Ascending aorta (tissue), 2 donors: ENCODE measurements at regions of chr14 and their contacts with region 1.

Region 1: DNA sequence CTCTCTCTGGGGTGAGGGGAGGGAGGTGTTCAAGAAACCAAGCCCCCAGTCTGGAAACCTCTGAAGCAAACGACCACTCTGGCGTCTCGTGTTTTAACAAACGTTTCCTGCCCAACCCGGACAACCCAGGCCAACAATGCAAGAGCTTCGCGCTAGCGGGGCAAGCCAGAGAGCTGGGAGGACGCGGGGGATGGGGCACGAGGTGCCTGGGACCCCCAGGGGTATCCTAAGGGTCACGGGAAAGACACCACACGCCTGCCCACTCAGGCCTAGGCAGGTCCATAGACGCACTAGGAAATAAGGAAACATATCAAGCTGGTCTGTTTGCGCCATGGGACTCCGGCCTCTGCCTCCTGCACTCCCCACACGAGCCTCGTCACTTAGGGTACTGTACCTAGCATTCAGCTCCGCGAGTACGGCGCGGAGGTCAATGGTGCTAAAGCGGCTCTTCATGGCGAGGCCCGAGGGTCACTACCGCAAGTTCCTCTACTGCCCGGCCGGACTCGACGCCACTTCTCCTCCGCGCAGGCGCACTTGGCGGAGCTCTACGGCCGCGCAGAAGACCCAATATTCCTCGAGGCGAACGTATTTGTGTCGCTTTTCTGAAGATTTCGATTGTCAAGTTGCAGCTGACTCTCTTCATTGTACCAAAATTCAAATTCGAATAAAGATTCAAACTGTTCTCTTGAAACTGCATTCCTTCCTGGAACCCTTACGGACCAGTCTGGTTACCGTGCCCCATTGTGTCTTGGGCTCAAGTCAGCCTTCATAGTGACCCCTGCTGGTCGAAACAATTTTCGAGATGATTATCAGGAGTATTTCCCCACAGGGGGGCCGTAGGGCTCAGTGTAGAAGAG is at the start of gene NEMF:
- DNase-seq: peak in 1 of 2 donors; percentile 93
- H3K4me3 ChIP-seq: peak within 1 kb of the TSS; percentile 81 to 92
- H3K27ac ChIP-seq: peak within 1 kb of the TSS; percentile 86 to 90
- H3K4me1 ChIP-seq: peaks cover 0 to 9% of the 10 kb centered on the region in 2 donors
- H3K27me3 ChIP-seq: no peaks in the 10 kb centered on the region
- CTCF ChIP-seq: peak; percentile 73 to 85 (median 80)
- total RNA-seq, gene NEMF: 14.6 TPM

Region 2: DNA sequence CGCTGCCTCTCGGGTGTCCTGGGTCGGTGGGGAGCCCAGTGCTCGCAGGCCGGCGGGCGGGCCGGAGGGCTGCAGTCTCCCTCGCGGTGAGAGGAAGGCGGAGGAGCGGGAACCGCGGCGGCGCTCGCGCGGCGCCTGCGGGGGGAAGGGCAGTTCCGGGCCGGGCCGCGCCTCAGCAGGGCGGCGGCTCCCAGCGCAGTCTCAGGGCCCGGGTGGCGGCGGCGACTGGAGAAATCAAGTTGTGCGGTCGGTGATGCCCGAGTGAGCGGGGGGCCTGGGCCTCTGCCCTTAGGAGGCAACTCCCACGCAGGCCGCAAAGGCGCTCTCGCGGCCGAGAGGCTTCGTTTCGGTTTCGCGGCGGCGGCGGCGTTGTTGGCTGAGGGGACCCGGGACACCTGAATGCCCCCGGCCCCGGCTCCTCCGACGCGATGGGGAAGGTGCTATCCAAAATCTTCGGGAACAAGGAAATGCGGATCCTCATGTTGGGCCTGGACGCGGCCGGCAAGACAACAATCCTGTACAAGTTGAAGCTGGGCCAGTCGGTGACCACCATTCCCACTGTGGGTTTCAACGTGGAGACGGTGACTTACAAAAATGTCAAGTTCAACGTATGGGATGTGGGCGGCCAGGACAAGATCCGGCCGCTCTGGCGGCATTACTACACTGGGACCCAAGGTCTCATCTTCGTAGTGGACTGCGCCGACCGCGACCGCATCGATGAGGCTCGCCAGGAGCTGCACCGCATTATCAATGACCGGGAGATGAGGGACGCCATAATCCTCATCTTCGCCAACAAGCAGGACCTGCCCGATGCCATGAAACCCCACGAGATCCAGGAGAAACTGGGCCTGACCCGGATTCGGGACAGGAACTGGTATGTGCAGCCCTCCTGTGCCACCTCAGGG is 41.0 kb after region 1 on chr14:
- intact Hi-C with region 1: no loop called
- DNase-seq: peak in 1 of 2 donors; percentile 83
- H3K4me3 ChIP-seq: peak overlapping the region; percentile 85 to 95
- H3K27ac ChIP-seq: peak overlapping the region; percentile 100
- H3K4me1 ChIP-seq: peaks cover 0 to 38% of the 10 kb centered on the region in 2 donors
- H3K27me3 ChIP-seq: no peaks in the 10 kb centered on the region
- CTCF ChIP-seq: no peak

Region 3: GRCh38 chr14:50116181-50116956 is 263.8 kb after region 1 on chr14 and contains the start of gene VCPKMT:
- intact Hi-C with region 1: loop called (anchors 2 kb)
- DNase-seq: peak; percentile 74 to 97
- H3K4me3 ChIP-seq: peak within 1 kb of the TSS; percentile 84
- H3K27ac ChIP-seq: peak within 1 kb of the TSS; percentile 82 to 85
- H3K4me1 ChIP-seq: peaks cover 0 to 10% of the 10 kb centered on the region in 2 donors
- H3K27me3 ChIP-seq: no peaks in the 10 kb centered on the region
- CTCF ChIP-seq: no peak
- total RNA-seq, gene VCPKMT: not detected